Mammary epithelial cell (primary cell): ENCODE measurements at regions of chr20 and their contacts with region 1.

Region 1: GRCh38 chr20:49151436-49151835 is 36.7 kb downstream of the STAU1 start:
- DNase-seq: no peak
- H3K4me3 ChIP-seq: no peak overlapping the region
- H3K27ac ChIP-seq: no peak overlapping the region
- H3K4me1 ChIP-seq: no peaks in the 10 kb centered on the region
- H3K27me3 ChIP-seq: no peaks in the 10 kb centered on the region
- CTCF ChIP-seq: no peak

Region 2: GRCh38 chr20:49132995-49133478 is 18.4 kb before region 1 on chr20:
- CTCF ChIA-PET with region 1: no interaction called
- dilution Hi-C with region 1: no loop called
- in situ Hi-C with region 1: no loop called
- intact Hi-C with region 1: no loop called
- DNase-seq: peak; percentile 45
- H3K4me3 ChIP-seq: no peak overlapping the region
- H3K27ac ChIP-seq: no peak overlapping the region
- H3K4me1 ChIP-seq: no peaks in the 10 kb centered on the region
- H3K27me3 ChIP-seq: no peaks in the 10 kb centered on the region
- CTCF ChIP-seq: peak; percentile 37 to 53

Region 3: DNA sequence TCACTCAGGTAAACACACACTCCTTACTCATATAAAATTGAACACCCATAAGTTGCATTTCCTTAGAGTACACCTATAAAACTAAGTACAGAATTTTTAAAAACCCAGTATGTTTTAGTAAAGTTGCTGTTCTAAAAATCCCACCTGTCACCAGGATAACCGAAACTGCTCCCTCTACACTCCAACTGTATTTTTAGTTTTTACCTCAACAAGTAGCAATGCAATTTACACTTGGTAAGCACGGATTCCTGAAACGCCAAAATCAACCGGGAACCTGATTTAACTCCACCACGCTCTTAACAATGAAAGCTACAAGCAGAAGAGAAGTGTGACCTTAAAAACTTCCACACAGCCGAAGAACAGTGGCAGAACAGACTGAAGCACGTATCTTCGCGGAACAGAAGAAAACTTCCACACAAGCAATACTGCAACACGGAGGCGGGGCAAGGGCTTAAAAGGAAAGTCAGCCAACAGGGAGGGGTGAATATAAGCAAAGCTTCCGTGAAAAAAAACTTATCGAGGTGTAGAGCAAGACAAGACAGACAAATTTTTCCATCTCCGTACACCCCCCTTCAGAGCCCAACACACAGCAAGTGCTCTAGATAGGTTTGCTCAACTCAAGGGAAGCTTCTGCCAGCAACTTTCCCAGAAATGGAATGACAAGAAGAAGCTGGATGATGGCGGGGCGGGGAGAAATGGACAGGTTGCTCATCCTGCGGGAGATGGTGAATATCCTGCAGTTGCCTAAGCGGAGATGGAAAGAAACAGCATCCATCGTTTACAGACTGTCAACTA is 35.3 kb after region 1 on chr20:
- CTCF ChIA-PET with region 1: no interaction called
- dilution Hi-C with region 1: loop called (anchors 5 kb)
- in situ Hi-C with region 1: no loop called
- intact Hi-C with region 1: no loop called
- DNase-seq: peak; percentile 66
- H3K4me3 ChIP-seq: peak overlapping the region; percentile 67 to 82 (median 79)
- H3K27ac ChIP-seq: peak overlapping the region; percentile 68
- H3K4me1 ChIP-seq: peaks cover 7% of the 10 kb centered on the region
- H3K27me3 ChIP-seq: no peaks in the 10 kb centered on the region
- CTCF ChIP-seq: no peak